MCF 10A (cell line): ENCODE measurements at regions of chr3 and their contacts with region 1.

Region 1: GRCh38 chr3:48635222-48636021 is at the start of gene SLC26A6:
- DNase-seq: peak; percentile 98
- H3K4me3 Mint-ChIP-seq: peak within 1 kb of the TSS; percentile 84
- H3K27ac Mint-ChIP-seq: peak within 1 kb of the TSS; percentile 85
- H3K4me1 Mint-ChIP-seq: peaks cover 10% of the 10 kb centered on the region
- H3K27me3 Mint-ChIP-seq: no peaks in the 10 kb centered on the region
- CTCF ChIP-seq: peak; percentile 48
- total RNA-seq, gene SLC26A6: 47.4 and 63.3 TPM in 2 replicates

Region 2: GRCh38 chr3:48285132-48285531 is 350.3 kb before region 1 on chr3:
- CTCF ChIA-PET with region 1: no interaction called
- POLR2A ChIA-PET with region 1: no interaction called
- intact Hi-C with region 1: no loop called
- DNase-seq: no peak
- H3K4me3 Mint-ChIP-seq: no peak overlapping the region
- H3K27ac Mint-ChIP-seq: no peak overlapping the region
- H3K4me1 Mint-ChIP-seq: no peaks in the 10 kb centered on the region
- H3K27me3 Mint-ChIP-seq: no peaks in the 10 kb centered on the region
- CTCF ChIP-seq: no peak

Region 3: GRCh38 chr3:48556793-48557626 is 78.4 kb before region 1 on chr3 and contains the start of gene PFKFB4:
- CTCF ChIA-PET with region 1: interaction called, 6 read pairs
- POLR2A ChIA-PET with region 1: interaction called, 64 read pairs
- intact Hi-C with region 1: loop called (anchors 1 kb)
- DNase-seq: peak; percentile 99
- H3K4me3 Mint-ChIP-seq: peak within 1 kb of the TSS; percentile 74
- H3K27ac Mint-ChIP-seq: peak within 1 kb of the TSS; percentile 47
- H3K4me1 Mint-ChIP-seq: peaks cover 11% of the 10 kb centered on the region
- H3K27me3 Mint-ChIP-seq: no peaks in the 10 kb centered on the region
- CTCF ChIP-seq: no peak
- total RNA-seq, gene PFKFB4: 3.4 and 4.6 TPM in 2 replicates

Region 4: DNA sequence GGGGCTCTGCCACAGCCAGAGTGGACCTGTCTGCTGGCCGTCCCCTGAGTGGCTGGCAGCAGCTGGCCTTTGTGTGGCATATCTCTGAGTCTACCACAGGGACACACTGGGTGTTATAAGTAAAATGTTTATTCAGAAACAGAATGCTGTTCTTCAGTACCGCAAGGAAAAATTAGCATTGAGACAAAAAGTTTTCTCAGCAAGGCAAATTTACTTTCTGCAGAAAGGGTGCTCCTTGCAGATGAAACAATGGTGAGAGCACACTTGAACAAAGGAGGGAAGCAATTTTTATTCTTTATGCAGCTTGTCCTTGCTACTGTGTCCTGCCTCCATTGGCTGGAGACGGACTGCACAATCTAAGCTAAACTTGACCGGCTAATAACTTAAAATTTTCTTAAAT is 17.9 kb before region 1 on chr3:
- CTCF ChIA-PET with region 1: interaction called, 12 read pairs
- POLR2A ChIA-PET with region 1: interaction called, 50 read pairs
- intact Hi-C with region 1: loop called (anchors 1 kb)
- DNase-seq: no peak
- H3K4me3 Mint-ChIP-seq: no peak overlapping the region
- H3K27ac Mint-ChIP-seq: peak overlapping the region; percentile 96
- H3K4me1 Mint-ChIP-seq: peaks cover 31% of the 10 kb centered on the region
- H3K27me3 Mint-ChIP-seq: no peaks in the 10 kb centered on the region
- CTCF ChIP-seq: no peak

Region 5: GRCh38 chr3:48685602-48686511 is 50.4 kb after region 1 on chr3 and contains the start of gene NCKIPSD:
- CTCF ChIA-PET with region 1: interaction called, 5 read pairs
- POLR2A ChIA-PET with region 1: interaction called, 10 read pairs
- intact Hi-C with region 1: loop called (anchors 2 kb)
- DNase-seq: peak; percentile 85
- H3K4me3 Mint-ChIP-seq: peak within 1 kb of the TSS; percentile 73
- H3K27ac Mint-ChIP-seq: peak within 1 kb of the TSS; percentile 85
- H3K4me1 Mint-ChIP-seq: peaks cover 31% of the 10 kb centered on the region
- H3K27me3 Mint-ChIP-seq: no peaks in the 10 kb centered on the region
- CTCF ChIP-seq: peak; percentile 63
- total RNA-seq, gene NCKIPSD: 23.8 and 26.9 TPM in 2 replicates